CD14-positive monocyte (primary cell): ENCODE measurements at regions of chr19 and their contacts with region 1.

Region 1: DNA sequence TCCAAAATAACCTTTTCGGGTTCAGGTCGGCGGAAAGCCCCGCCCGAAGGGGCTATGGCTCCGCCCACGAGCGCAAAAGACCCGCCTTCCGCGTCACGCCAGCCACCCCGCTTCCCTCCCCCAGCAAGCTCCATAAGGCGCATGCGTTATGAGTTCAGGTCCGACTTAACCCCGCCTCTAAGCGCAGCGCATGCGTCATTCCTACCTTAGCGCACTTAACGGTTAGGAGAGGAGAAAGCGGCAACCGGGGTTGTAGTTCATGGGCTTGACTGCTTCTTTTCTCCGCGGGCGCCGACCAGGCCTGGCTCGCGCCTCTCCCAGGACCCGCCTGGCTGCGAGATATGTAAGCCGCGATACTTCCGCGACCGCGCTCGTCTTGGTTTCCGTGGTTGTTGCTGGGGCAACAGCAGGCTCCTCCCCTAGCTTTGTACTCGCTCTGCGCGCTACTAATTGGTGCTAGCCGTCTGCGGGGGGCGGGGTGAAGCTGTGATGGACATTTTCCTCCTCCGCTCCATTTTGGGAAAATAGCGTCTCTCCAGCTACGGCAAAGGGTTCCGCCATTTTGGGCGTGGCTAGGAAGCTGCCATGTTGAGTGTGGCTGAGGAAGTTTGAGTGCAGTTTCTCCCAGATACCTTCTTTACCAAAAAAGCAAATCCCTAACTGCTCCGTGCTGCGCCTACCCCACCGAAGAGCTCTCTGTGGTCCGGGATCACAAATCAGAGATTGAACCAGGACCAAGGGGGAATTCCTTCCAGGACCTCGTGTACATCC is at the start of gene B9D2:
- DNase-seq: peak; percentile 97 to 98 (median 98)
- H3K4me3 ChIP-seq: peak within 1 kb of the TSS; percentile 67 to 91 (median 91)
- H3K4me3 Mint-ChIP-seq: peak within 1 kb of the TSS; percentile 88 to 95
- H3K27ac ChIP-seq: peak within 1 kb of the TSS; percentile 97 to 99
- H3K27ac Mint-ChIP-seq: peak within 1 kb of the TSS; percentile 96 to 100 (median 99)
- H3K4me1 ChIP-seq: peaks cover 59 to 62% of the 10 kb centered on the region in 2 donors
- H3K4me1 Mint-ChIP-seq: peaks cover 52% of the 10 kb centered on the region
- H3K27me3 ChIP-seq: no peaks in the 10 kb centered on the region
- H3K27me3 Mint-ChIP-seq: peaks cover 0 to 2% (median 0%) of the 10 kb centered on the region in 3 donors
- CTCF ChIP-seq: no peak
- polyA plus RNA-seq, gene B9D2: 12.2 to 32.5 (median 25.1) TPM

Region 2: DNA sequence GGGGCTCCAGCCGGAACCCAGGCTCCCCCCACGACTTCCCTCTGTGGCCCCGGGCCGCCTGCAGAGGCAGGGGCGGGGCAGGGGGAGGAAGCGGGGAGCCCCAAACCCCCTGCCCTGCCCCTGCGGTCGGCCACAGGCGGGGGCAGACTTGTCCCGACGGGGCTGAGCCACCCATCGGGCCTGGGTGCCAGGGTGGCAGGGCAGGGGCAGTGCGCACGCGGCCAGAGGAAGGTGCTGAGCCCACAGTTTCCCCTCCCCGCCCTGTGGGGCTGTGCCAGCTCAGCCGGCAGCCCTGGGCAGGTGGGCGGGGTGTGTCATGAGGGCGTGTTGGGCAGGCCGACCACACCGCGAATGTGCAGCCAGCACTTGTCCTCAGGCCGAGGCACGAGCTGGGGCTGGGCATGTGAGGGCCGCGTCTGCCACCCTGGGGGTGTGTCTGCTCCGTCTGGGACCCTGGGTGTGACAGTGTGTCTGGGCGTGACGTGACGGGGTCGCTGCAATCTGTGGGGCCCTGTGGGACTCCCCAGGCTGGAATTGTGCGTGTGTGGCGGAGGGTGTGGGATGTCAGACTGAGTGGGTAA is 36.3 kb before region 1 on chr19:
- intact Hi-C with region 1: loop called in 1 of 2 experiments (anchors 5 kb)
- DNase-seq: peak; percentile 91 to 96 (median 93)
- H3K4me3 ChIP-seq: peak overlapping the region; percentile 0 to 62 (median 38)
- H3K4me3 Mint-ChIP-seq: peak overlapping the region; percentile 84 to 93
- H3K27ac ChIP-seq: peak overlapping the region; percentile 90 to 96
- H3K27ac Mint-ChIP-seq: peak overlapping the region; percentile 95 to 99 (median 99)
- H3K4me1 ChIP-seq: peaks cover 93 to 100% of the 10 kb centered on the region in 2 donors
- H3K4me1 Mint-ChIP-seq: peaks cover 80% of the 10 kb centered on the region
- H3K27me3 ChIP-seq: no peaks in the 10 kb centered on the region
- H3K27me3 Mint-ChIP-seq: peaks cover 0 to 2% (median 0%) of the 10 kb centered on the region in 3 donors
- CTCF ChIP-seq: no peak

Region 3: DNA sequence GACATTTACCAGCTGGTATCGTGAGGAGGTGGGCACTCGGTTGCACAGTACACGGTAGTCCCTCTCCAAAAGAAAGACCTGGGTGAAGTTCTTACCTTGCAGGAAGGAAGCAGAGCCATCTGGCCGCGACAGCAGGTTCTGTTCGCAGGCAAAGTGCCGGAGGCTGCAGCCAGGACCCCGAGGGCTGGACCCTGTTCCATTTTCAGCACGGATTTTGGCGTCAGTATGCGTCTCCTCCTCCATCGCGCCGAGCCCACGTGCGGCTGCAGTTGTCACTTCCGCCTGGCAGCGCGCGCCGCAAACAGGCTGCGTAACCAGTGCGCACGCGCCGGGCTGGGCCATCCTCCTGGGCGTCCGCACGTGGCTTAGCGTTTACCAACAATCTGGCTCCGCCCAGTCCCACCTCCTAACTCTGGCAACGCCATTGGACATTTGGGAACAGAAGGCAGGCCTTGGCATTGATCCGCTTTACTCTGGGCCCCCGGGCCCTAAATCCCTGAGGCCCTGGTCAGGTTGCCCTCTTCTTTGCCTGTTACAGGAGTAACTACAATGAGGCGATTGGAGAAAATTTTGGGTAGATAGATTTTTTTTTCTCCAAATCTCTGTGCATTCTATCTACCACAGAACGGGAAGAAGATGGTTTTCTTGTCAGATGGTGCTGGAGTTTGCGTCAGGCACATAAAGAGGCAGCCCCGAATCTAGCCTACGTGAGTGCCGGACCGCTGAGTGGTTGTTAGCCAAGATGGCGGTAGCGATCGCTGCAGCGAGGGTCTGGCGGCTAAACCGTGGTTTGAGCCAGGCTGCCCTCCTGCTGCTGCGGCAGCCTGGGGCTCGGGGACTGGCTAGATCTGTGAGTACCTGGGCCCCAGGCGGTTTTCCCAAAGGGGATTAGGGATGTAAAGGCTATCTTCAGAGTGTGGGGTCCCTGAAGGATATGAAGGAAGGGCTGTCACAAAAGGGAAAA is 33.4 kb after region 1 on chr19 and contains the starts of genes BCKDHA and EXOSC5:
- intact Hi-C with region 1: loop called (anchors 1 to 5 kb)
- DNase-seq: peak; percentile 100
- H3K4me3 ChIP-seq: peak within 1 kb of the TSS; percentile 87 to 95 (median 95)
- H3K4me3 Mint-ChIP-seq: peak within 1 kb of the TSS; percentile 97
- H3K27ac ChIP-seq: peak within 1 kb of the TSS; percentile 80 to 97
- H3K27ac Mint-ChIP-seq: peak within 1 kb of the TSS; percentile 98 to 100 (median 99)
- H3K4me1 ChIP-seq: peaks cover 29 to 30% of the 10 kb centered on the region in 2 donors
- H3K4me1 Mint-ChIP-seq: peaks cover 42% of the 10 kb centered on the region
- H3K27me3 ChIP-seq: no peaks in the 10 kb centered on the region
- H3K27me3 Mint-ChIP-seq: no peaks in the 10 kb centered on the region
- CTCF ChIP-seq: no peak
- polyA plus RNA-seq, gene BCKDHA: 52.4 to 90.1 (median 87.6) TPM
- polyA plus RNA-seq, gene EXOSC5: 24.0 to 58.7 (median 40.5) TPM